A673 (cell line): ENCODE measurements at regions of chr13 and their contacts with region 1.

Region 1: GRCh38 chr13:77176350-77176749 is 149.4 kb upstream of the FBXL3 start:
- DNase-seq: no peak
- H3K4me3 ChIP-seq: no peak overlapping the region
- H3K27ac ChIP-seq: no peak overlapping the region
- H3K4me1 ChIP-seq: no peaks in the 10 kb centered on the region
- H3K27me3 ChIP-seq: no peaks in the 10 kb centered on the region
- CTCF ChIP-seq: no peak

Region 2: DNA sequence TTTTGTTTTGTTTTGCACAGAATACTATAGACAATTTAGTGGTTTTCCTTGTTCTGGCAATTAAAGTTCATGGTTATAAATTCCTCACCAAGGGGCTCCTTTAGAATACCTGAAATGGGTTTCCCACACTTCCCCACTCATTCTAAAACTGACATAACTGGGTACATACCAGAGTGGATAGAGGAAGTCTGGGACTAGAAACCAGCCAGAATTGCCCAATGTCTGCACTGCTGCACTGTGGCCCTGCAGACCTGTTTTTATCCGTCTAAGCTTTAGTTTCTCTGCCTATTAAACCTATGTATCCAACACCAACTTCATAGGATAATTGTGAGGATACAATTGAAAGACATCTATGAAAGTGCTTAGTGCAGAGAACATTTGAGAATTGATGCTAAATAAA is 788.8 kb before region 1 on chr13:
- CTCF ChIA-PET with region 1: no interaction called
- POLR2A ChIA-PET with region 1: no interaction called
- intact Hi-C with region 1: no loop called
- DNase-seq: no peak
- H3K4me3 ChIP-seq: no peak overlapping the region
- H3K27ac ChIP-seq: no peak overlapping the region
- H3K4me1 ChIP-seq: no peaks in the 10 kb centered on the region
- H3K27me3 ChIP-seq: peaks cover 4% of the 10 kb centered on the region
- CTCF ChIP-seq: no peak

Region 3: GRCh38 chr13:77056382-77056781 is 120.0 kb before region 1 on chr13:
- CTCF ChIA-PET with region 1: no interaction called
- POLR2A ChIA-PET with region 1: interaction called, 22 read pairs
- intact Hi-C with region 1: no loop called
- DNase-seq: no peak
- H3K4me3 ChIP-seq: no peak overlapping the region
- H3K27ac ChIP-seq: no peak overlapping the region
- H3K4me1 ChIP-seq: no peaks in the 10 kb centered on the region
- H3K27me3 ChIP-seq: no peaks in the 10 kb centered on the region
- CTCF ChIP-seq: no peak

Region 4: GRCh38 chr13:77124423-77124822 is 51.9 kb before region 1 on chr13:
- CTCF ChIA-PET with region 1: no interaction called
- POLR2A ChIA-PET with region 1: no interaction called
- intact Hi-C with region 1: no loop called
- DNase-seq: no peak
- H3K4me3 ChIP-seq: no peak overlapping the region
- H3K27ac ChIP-seq: no peak overlapping the region
- H3K4me1 ChIP-seq: no peaks in the 10 kb centered on the region
- H3K27me3 ChIP-seq: no peaks in the 10 kb centered on the region
- CTCF ChIP-seq: no peak

Region 5: DNA sequence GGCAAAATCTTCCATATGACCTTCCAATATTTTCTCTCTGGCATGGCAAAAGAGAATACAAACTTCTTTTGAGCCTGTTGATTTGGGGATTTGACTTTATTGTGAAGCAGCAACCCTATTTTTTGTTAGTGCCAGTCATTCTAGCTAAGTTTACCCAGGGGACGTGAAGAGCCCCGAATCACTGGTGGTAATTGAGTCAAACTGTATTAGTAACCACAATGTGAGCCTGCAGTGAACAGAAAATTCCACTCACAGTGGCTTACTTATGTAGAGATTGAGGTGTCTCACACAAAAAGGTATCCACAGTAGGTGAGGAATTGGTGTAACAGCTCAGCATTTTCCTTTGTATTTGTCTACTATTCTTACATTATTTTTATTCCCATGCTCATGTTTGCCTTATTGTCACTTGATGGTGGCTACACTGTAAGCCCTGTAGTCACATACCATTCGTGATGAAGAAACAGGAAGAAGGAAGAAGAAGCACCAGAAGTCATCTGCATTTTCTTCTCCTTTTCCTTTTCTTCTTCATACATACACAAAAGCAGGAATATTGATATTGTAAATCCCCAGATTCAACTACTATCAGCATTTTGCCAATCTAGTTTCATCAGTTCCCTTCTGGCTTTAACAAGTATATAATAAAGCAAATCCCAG is 183.8 kb after region 1 on chr13:
- CTCF ChIA-PET with region 1: no interaction called
- POLR2A ChIA-PET with region 1: no interaction called
- intact Hi-C with region 1: no loop called
- DNase-seq: no peak
- H3K4me3 ChIP-seq: no peak overlapping the region
- H3K27ac ChIP-seq: no peak overlapping the region
- H3K4me1 ChIP-seq: no peaks in the 10 kb centered on the region
- H3K27me3 ChIP-seq: no peaks in the 10 kb centered on the region
- CTCF ChIP-seq: no peak

Region 6: GRCh38 chr13:77528834-77529505 is 352.6 kb after region 1 on chr13:
- CTCF ChIA-PET with region 1: no interaction called
- POLR2A ChIA-PET with region 1: no interaction called
- intact Hi-C with region 1: no loop called
- DNase-seq: no peak
- H3K4me3 ChIP-seq: no peak overlapping the region
- H3K27ac ChIP-seq: no peak overlapping the region
- H3K4me1 ChIP-seq: no peaks in the 10 kb centered on the region
- H3K27me3 ChIP-seq: no peaks in the 10 kb centered on the region
- CTCF ChIP-seq: no peak